Thyroid gland (tissue), 4 donors: ENCODE measurements at regions of chr4 and their contacts with region 1.

Region 1: GRCh38 chr4:94406668-94407437 is 44.9 kb upstream of the PDLIM5 start:
- DNase-seq: peak; percentile 75
- H3K4me3 ChIP-seq: no peak overlapping the region
- H3K27ac ChIP-seq: no peak overlapping the region
- H3K4me1 ChIP-seq: peaks cover 0 to 8% of the 10 kb centered on the region in 2 donors
- H3K27me3 ChIP-seq: no peaks in the 10 kb centered on the region
- CTCF ChIP-seq: peak; percentile 68 to 91 (median 82)
- POLR2A ChIP-seq: no peak

Region 2: DNA sequence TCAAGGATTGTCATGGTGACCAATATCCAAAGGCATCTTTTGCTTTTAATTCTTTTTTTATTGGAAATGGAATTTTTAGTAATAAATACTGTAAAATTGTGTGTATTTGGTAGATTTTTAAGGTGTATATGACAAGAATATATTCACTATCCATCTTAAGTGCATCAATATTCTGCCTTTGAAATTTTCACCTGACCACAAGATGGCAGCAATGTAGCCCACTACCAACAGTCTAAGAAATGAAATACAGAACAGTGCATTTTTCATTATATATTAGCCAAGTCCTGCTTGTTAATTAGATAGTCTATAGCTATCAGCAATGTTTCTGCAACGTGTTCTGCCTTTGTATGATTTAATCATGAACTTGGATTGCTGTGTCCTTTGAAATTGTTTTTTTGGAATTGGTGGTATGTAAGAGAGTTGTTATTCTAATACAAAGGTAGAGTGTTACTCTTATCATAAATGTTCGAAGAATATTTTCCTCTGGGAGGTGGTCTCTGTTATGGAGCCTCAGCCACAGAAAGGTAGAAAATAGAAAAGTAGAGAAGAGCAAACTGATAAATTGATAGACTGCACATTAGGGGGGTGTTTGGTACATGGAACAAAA is 102.4 kb before region 1 on chr4:
- intact Hi-C with region 1: no loop called
- DNase-seq: no peak
- H3K4me3 ChIP-seq: no peak overlapping the region
- H3K27ac ChIP-seq: no peak overlapping the region
- H3K4me1 ChIP-seq: no peaks in the 10 kb centered on the region
- H3K27me3 ChIP-seq: no peaks in the 10 kb centered on the region
- CTCF ChIP-seq: peak in 5 of 6 experiments; percentile 26 to 58 (median 37)
- POLR2A ChIP-seq: no peak

Region 3: GRCh38 chr4:94595879-94596483 is 189.1 kb after region 1 on chr4:
- intact Hi-C with region 1: loop called (anchors 5 kb)
- DNase-seq: no peak
- H3K4me3 ChIP-seq: no peak overlapping the region
- H3K27ac ChIP-seq: no peak overlapping the region
- H3K4me1 ChIP-seq: no peaks in the 10 kb centered on the region
- H3K27me3 ChIP-seq: no peaks in the 10 kb centered on the region
- CTCF ChIP-seq: peak; percentile 11 to 85 (median 57)
- POLR2A ChIP-seq: no peak